ENCODE measurements at regions of chr3 and their contacts with region 1.

Region 1: GRCh38 chr3:52291508-52292181 is 4.0 kb downstream of the GLYCTK start:
- DNase-seq: peak; percentile 51
- H3K4me3 Mint-ChIP-seq: no peak overlapping the region
- H3K27ac Mint-ChIP-seq: no peak overlapping the region
- H3K4me1 Mint-ChIP-seq: peaks cover 24% of the 10 kb centered on the region
- H3K27me3 Mint-ChIP-seq: no peaks in the 10 kb centered on the region

Region 2: GRCh38 chr3:51982782-51983577 is 308.7 kb before region 1 on chr3 and contains the start of gene ACY1:
- CTCF ChIA-PET with region 1: no interaction called
- intact Hi-C with region 1: loop called (anchors 5 kb)
- DNase-seq: peak; percentile 89
- H3K4me3 Mint-ChIP-seq: peak within 1 kb of the TSS; percentile 95
- H3K27ac Mint-ChIP-seq: peak within 1 kb of the TSS; percentile 91
- H3K4me1 Mint-ChIP-seq: peaks cover 29% of the 10 kb centered on the region
- H3K27me3 Mint-ChIP-seq: no peaks in the 10 kb centered on the region
- total RNA-seq, gene ACY1: 62.1 to 68.9 TPM

Region 3: GRCh38 chr3:52317208-52318000 is 25.8 kb after region 1 on chr3:
- CTCF ChIA-PET with region 1: interaction called, 3 read pairs
- intact Hi-C with region 1: loop called (anchors 2 kb)
- DNase-seq: peak; percentile 77
- H3K4me3 Mint-ChIP-seq: peak overlapping the region; percentile 58
- H3K27ac Mint-ChIP-seq: no peak overlapping the region
- H3K4me1 Mint-ChIP-seq: peaks cover 20% of the 10 kb centered on the region
- H3K27me3 Mint-ChIP-seq: no peaks in the 10 kb centered on the region

Measured in activated naive CD4-positive, alpha-beta T cell treated with anti-CD3 and anti-CD28 coated beads for 36 hours (primary cell).